ENCODE measurements at regions of chr10 and their contacts with region 1.

Region 1: DNA sequence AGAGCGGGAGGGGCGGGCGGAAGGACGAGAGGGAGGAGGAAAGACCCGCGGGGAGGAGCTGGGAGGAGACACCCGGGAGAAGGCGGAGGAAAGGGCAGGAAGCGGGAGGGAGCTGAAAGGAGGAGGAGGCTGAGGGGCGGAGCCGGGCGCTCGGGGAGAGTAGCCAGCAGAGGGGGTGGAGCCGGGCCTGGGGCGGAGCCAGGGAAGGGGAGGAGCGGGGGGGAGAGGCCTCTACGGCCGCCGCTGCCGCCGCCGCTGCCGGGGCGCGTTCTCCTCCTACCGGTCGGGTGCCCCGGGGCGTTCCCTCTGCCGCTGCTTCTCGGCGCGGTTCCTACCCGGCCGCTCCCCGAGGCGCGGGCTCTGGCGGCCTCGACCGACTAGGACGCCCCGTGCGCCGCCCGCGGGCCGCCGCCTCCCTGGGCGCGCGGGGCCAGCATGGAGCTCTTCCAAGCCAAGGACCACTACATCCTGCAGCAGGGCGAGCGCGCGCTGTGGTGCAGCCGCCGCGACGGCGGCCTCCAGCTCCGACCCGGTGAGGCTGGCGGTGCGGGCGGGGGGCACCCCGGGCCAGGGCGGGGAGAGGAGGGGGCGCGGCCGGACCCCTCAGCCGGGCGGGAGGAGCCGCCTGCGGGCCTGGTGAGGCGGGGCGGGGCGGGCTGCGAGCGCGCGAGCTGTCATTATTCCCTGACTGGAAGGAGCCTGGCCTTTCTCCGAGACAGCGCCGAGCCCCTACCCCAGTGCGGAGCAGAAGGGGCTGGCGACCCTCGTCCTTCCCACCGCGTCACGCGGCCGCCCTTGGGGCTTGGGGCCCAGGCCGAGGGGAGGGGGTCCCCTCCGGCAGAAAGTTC is at the start of gene INPP5F:
- DNase-seq: peak; percentile 99
- H3K4me3 ChIP-seq: peak within 1 kb of the TSS; percentile 82
- H3K27ac ChIP-seq: peak within 1 kb of the TSS; percentile 90 to 91
- H3K4me1 ChIP-seq: no peaks in the 10 kb centered on the region
- H3K27me3 ChIP-seq: no peaks in the 10 kb centered on the region
- CTCF ChIP-seq: peak in 3 of 4 experiments; percentile 35 to 60 (median 43)
- POLR2A ChIP-seq: peak; percentile 60
- total RNA-seq, gene INPP5F: 8.6 to 15.9 TPM

Region 2: GRCh38 chr10:119608316-119609155 is 117.5 kb before region 1 on chr10:
- intact Hi-C with region 1: loop called (anchors 5 kb)
- DNase-seq: peak; percentile 58
- H3K4me3 ChIP-seq: no peak overlapping the region
- H3K27ac ChIP-seq: no peak overlapping the region
- H3K4me1 ChIP-seq: no peaks in the 10 kb centered on the region
- H3K27me3 ChIP-seq: no peaks in the 10 kb centered on the region
- CTCF ChIP-seq: peak; percentile 18 to 77 (median 71)
- POLR2A ChIP-seq: no peak

Region 3: DNA sequence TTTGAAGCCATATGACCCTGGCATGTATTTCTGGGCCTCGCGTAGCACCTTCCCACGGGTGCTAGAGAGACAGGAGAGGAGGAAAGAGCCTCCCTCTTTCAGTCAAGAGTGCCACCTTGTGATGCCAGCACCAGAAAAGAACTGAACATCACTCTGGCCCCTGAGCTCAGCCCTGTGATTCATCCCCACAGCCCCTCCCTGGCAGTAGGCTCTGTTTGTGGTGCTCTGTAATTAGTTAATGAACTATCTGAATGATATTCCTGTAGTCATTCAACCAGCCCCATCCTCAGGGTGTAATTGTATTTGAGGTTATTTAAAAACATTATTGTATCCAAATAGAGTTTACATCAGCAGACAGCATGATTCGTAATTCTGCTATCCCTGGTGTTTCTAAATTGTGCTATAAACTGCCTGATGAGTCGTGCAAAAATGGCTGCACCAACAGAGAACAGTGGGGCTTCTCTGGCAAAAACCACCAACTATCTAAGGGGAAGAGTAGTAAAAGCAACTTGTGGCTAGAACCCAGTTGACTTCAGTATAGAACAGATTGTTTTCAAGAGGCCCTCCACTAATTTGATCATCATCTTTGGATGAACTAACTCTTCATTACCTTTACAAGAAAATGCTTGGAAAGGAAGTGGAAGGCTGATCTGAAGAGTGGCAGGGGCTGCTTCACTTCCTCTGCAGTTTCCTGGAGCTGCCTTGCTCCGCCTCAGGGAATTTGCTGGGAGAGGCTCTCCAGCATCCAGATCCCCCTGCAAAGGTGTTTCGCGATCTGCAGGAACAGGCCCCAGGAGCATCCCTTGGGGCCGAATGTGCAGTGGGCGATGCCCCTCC is 105.6 kb before region 1 on chr10:
- intact Hi-C with region 1: no loop called
- DNase-seq: no peak
- H3K4me3 ChIP-seq: no peak overlapping the region
- H3K27ac ChIP-seq: no peak overlapping the region
- H3K4me1 ChIP-seq: no peaks in the 10 kb centered on the region
- H3K27me3 ChIP-seq: no peaks in the 10 kb centered on the region
- CTCF ChIP-seq: no peak
- POLR2A ChIP-seq: no peak

Region 4: GRCh38 chr10:119667562-119668328 is 58.3 kb before region 1 on chr10:
- intact Hi-C with region 1: no loop called
- DNase-seq: peak; percentile 50
- H3K4me3 ChIP-seq: no peak overlapping the region
- H3K27ac ChIP-seq: peak overlapping the region; percentile 18 to 58
- H3K4me1 ChIP-seq: peaks cover 15% of the 10 kb centered on the region
- H3K27me3 ChIP-seq: no peaks in the 10 kb centered on the region
- CTCF ChIP-seq: no peak
- POLR2A ChIP-seq: no peak

Region 5: DNA sequence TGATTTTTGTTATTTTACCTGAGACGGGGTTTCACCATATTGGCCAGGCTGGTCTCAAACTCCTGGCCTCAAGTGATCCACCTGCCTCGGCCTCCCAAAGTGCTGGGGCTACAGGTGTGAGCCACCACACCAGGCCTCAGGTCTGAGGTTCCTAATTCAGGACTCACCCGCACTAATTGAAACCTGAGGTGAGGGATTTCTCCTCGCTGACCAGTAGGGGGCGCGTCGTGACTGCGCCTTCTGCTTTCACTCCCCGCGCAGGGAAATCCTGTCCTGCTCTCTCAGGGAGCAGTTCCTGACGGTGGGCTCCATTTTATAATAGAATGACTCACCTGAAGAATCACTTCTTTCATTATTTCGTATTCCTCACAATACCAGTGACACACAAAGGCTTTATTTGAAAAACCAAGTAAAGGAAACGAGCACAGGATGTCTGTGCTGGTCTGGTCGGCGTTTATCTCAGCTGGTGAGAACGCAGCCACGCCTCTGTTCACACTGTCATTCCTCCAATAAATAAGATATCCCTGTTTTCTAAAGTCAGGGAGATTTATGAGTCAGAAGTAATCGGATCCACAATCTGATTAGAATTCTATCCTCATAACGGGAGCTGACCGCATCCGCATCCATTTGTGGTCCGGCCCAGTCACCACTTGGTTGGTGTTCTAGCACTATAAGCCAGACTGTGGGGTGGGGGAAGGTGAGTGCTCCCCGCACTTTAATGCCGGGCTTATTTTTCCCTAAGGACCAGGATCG is 39.4 kb before region 1 on chr10:
- intact Hi-C with region 1: loop called (anchors 5 kb)
- DNase-seq: peak; percentile 63
- H3K4me3 ChIP-seq: peak overlapping the region in 1 of 2 donors; percentile 13
- H3K27ac ChIP-seq: peak overlapping the region; percentile 59 to 65
- H3K4me1 ChIP-seq: peaks cover 4% of the 10 kb centered on the region
- H3K27me3 ChIP-seq: no peaks in the 10 kb centered on the region
- CTCF ChIP-seq: peak; percentile 87 to 94 (median 91)
- POLR2A ChIP-seq: no peak

Region 6: GRCh38 chr10:119796039-119796438 is 70.0 kb after region 1 on chr10:
- intact Hi-C with region 1: no loop called
- DNase-seq: no peak
- H3K4me3 ChIP-seq: no peak overlapping the region
- H3K27ac ChIP-seq: no peak overlapping the region
- H3K4me1 ChIP-seq: no peaks in the 10 kb centered on the region
- H3K27me3 ChIP-seq: no peaks in the 10 kb centered on the region
- CTCF ChIP-seq: no peak
- POLR2A ChIP-seq: no peak

Region 7: GRCh38 chr10:120052964-120053702 is 327.1 kb after region 1 on chr10:
- intact Hi-C with region 1: no loop called
- DNase-seq: peak; percentile 70
- H3K4me3 ChIP-seq: no peak overlapping the region
- H3K27ac ChIP-seq: no peak overlapping the region
- H3K4me1 ChIP-seq: peaks cover 3% of the 10 kb centered on the region
- H3K27me3 ChIP-seq: no peaks in the 10 kb centered on the region
- CTCF ChIP-seq: no peak
- POLR2A ChIP-seq: no peak

Measured in prostate gland (tissue), 2 donors.